PC-9 (cell line): ENCODE measurements at regions of chr17 and their contacts with region 1.

Region 1: DNA sequence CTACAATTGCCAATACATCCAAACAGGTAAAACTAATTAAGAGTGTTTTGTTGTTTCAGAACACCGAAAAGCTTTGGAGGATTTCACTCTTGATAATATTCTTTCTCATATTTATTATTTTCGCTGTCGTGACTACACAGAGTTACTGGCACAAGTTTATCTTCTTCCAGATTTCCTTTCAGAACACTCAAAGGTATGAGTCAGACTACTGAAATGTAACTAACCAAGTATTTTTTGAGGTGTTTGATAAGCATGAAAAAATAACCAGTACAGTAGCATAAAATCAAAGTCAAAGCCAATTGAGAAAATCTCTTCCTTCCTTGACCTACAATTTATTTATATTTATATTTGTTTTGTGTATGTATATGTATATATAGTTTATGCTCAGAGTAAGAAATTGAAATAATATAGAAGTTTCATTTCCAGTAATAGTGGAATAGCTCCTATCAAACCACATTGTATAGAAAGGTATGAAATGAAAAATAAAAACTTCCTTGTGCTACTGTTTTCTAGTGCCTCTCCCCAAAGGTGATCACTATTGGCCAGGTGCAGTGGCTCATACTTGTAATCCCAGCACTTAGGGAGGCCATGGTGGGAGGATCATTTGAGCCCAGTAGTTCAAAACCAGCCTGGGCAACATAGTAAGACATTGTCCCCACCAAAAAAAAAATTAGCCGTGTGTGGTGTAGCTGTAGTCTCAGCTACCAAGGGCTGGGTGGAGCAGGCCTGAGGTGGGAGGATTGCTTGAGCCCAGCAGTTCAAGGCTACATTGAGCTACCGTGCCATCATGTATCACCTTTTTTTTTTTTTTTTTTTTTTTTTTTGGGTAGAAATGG is 11.0 kb downstream of the RAD51C start:
- DNase-seq: peak in 1 of 2 experiments; percentile 84
- H3K4me3 ChIP-seq: no peak overlapping the region
- H3K27ac ChIP-seq: peak overlapping the region; percentile 59
- H3K4me1 ChIP-seq: peaks cover 26% of the 10 kb centered on the region
- H3K27me3 ChIP-seq: no peaks in the 10 kb centered on the region
- CTCF ChIP-seq: no peak

Region 2: DNA sequence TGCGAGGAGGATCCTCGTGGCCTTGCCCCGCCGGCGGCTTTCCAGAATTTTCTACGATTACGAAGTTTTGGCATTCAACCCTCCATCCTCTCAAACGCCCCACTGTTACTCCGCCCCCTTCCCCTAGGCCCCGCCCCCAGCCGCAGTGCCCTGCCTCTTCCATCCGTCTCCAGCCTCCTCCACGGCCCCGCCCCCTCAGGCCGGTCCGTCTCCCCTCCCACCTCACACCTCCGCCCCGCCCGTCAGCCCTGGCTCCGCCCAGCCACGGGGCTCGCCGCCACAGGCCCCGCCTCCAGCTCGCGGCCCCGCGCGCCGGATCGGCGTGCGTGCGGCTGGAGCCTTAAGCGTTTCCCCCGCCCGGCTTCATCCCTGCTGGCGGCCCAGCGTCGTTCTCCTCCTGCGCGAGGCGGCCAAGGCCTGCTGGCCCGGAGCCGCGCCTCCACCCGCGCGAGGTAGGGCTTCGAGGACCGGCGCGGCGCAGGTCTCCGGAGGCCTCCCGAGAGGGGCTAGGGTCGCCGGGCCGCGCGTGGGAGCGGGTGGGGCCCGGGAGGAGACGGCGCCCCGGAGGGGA is 1869.5 kb before region 1 on chr17 and contains the starts of genes C17orf67 and DGKE:
- CTCF ChIA-PET with region 1: interaction called, 15 read pairs
- POLR2A ChIA-PET with region 1: no interaction called
- intact Hi-C with region 1: no loop called
- DNase-seq: peak; percentile 82 to 97
- H3K4me3 ChIP-seq: peak within 1 kb of the TSS; percentile 94
- H3K27ac ChIP-seq: peak within 1 kb of the TSS; percentile 24
- H3K4me1 ChIP-seq: peaks cover 32% of the 10 kb centered on the region
- H3K27me3 ChIP-seq: no peaks in the 10 kb centered on the region
- CTCF ChIP-seq: no peak
- total RNA-seq, gene C17orf67: 4.3 and 6.4 TPM in 2 replicates
- total RNA-seq, gene DGKE: 11.0 and 16.2 TPM in 2 replicates

Region 3: GRCh38 chr17:58587702-58588254 is 115.6 kb before region 1 on chr17:
- CTCF ChIA-PET with region 1: interaction called, 5 read pairs
- POLR2A ChIA-PET with region 1: no interaction called
- intact Hi-C with region 1: loop called (anchors 5 kb)
- DNase-seq: peak; percentile 41 to 55
- H3K4me3 ChIP-seq: no peak overlapping the region
- H3K27ac ChIP-seq: no peak overlapping the region
- H3K4me1 ChIP-seq: no peaks in the 10 kb centered on the region
- H3K27me3 ChIP-seq: no peaks in the 10 kb centered on the region
- CTCF ChIP-seq: peak; percentile 98

Region 4: GRCh38 chr17:58658804-58659713 is 44.3 kb before region 1 on chr17:
- CTCF ChIA-PET with region 1: no interaction called
- POLR2A ChIA-PET with region 1: interaction called, 6 read pairs
- intact Hi-C with region 1: loop called (anchors 1 kb)
- DNase-seq: peak; percentile 80 to 99
- H3K4me3 ChIP-seq: peak overlapping the region; percentile 61
- H3K27ac ChIP-seq: peak overlapping the region; percentile 89
- H3K4me1 ChIP-seq: peaks cover 14% of the 10 kb centered on the region
- H3K27me3 ChIP-seq: no peaks in the 10 kb centered on the region
- CTCF ChIP-seq: no peak

Region 5: GRCh38 chr17:58679263-58680037 is 23.9 kb before region 1 on chr17:
- CTCF ChIA-PET with region 1: no interaction called
- POLR2A ChIA-PET with region 1: no interaction called
- intact Hi-C with region 1: loop called (anchors 2 kb)
- DNase-seq: peak; percentile 45 to 99
- H3K4me3 ChIP-seq: peak overlapping the region; percentile 25; the same call in 1 of the 2 replicates
- H3K27ac ChIP-seq: peak overlapping the region; percentile 48
- H3K4me1 ChIP-seq: peaks cover 22% of the 10 kb centered on the region
- H3K27me3 ChIP-seq: no peaks in the 10 kb centered on the region
- CTCF ChIP-seq: no peak; the same call in 1 of the 2 replicates

Region 6: GRCh38 chr17:59607817-59608403 is 904.6 kb after region 1 on chr17:
- CTCF ChIA-PET with region 1: no interaction called
- POLR2A ChIA-PET with region 1: no interaction called
- intact Hi-C with region 1: no loop called
- DNase-seq: no peak
- H3K4me3 ChIP-seq: no peak overlapping the region
- H3K27ac ChIP-seq: no peak overlapping the region
- H3K4me1 ChIP-seq: no peaks in the 10 kb centered on the region
- H3K27me3 ChIP-seq: no peaks in the 10 kb centered on the region
- CTCF ChIP-seq: peak; percentile 41